Dorsolateral prefrontal cortex (tissue), 120 donors: ENCODE measurements at regions of chr1 and their contacts with region 1.

Region 1: DNA sequence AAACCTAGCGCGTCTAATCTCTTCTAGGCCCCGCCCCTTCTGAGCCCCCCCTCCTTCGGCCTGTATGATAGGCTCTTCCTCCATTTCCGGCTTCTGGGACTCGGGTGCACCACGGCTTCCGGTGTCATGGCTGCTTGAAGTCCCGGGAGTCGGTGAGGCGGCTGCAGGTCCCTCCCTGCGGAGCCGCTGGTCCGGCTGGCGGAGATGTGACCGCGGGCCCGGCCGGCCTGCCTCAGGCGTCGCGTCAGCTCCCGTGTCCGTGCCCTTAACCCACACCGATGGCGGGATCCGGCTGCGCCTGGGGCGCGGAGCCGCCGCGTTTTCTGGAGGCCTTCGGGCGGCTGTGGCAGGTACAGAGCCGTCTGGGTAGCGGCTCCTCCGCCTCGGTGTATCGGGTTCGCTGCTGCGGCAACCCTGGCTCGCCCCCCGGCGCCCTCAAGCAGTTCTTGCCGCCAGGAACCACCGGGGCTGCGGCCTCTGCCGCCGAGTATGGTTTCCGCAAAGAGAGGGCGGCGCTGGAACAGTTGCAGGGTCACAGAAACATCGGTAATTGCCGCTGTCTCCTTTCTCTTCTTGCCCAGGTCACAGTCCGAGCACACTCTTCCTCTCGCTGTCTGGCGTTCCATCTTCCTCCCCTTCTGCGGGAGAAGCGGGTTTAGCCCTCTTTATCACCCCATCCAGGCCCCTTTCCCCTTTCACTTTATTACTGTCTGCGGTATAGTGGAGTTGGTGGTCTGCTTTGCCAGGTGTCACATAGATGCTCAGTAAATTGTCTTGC is at the start of gene UHMK1:
- DNase-seq: peak; percentile 83 to 94 (median 90)
- H3K4me3 ChIP-seq: peak within 1 kb of the TSS; percentile 67 to 100 (median 97)
- H3K27ac ChIP-seq: peak within 1 kb of the TSS; percentile 66 to 97 (median 91)
- H3K27me3 ChIP-seq: no peaks in the 10 kb centered on the region
- CTCF ChIP-seq: peak in 9 of 56 donors; percentile 2 to 28 (median 16)
- total RNA-seq, gene UHMK1: 37.6 to 89.4 (median 64.2) TPM

Region 2: GRCh38 chr1:162357681-162358266 is 140.1 kb before region 1 on chr1:
- intact Hi-C with region 1: no loop called
- DNase-seq: no peak
- H3K4me3 ChIP-seq: no peak overlapping the region
- H3K27ac ChIP-seq: no peak overlapping the region
- H3K27me3 ChIP-seq: no peaks in the 10 kb centered on the region
- CTCF ChIP-seq: peak in 35 of 56 donors; percentile 9 to 55 (median 27)

Region 3: DNA sequence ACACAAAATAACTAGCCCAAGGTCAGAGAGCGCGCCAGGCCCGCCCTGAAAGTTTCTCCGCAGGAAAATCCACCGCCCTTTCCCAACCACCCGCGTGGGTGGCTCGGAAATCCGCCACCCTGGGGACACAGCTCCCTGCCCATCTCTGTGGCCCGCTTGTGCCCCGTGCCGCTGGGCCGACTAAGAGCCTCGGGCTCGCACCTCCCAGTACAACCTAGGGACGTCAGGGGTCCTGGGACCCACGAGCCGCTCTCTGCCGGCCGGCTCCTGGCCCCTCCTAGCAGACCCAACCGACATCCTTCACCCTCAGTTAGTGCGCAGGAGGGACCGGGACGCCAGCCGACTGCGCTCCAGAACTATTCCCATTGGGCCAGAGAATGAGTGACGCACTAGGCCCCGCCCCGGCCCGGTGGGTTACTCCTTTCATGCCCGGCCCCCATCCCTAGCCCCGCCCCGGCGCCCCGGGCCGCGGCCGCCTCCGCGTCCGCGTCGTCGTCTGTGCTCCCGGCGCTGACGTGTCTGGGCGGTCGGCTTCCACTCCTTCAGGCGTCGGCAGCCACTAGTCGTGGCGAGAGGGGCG is 63.2 kb after region 1 on chr1:
- intact Hi-C with region 1: loop called (anchors 5 to 10 kb)
- DNase-seq: peak; percentile 93 to 99 (median 98)
- H3K4me3 ChIP-seq: peak overlapping the region; percentile 52 to 100 (median 90)
- H3K27ac ChIP-seq: peak overlapping the region; percentile 80 to 98 (median 92)
- H3K27me3 ChIP-seq: no peaks in the 10 kb centered on the region
- CTCF ChIP-seq: peak in 10 of 56 donors; percentile 7 to 45 (median 19)

Region 4: GRCh38 chr1:162616848-162617247 is 118.9 kb after region 1 on chr1:
- intact Hi-C with region 1: no loop called
- DNase-seq: no peak
- H3K4me3 ChIP-seq: no peak overlapping the region
- H3K27ac ChIP-seq: no peak overlapping the region
- H3K27me3 ChIP-seq: no peaks in the 10 kb centered on the region
- CTCF ChIP-seq: no peak

Region 5: DNA sequence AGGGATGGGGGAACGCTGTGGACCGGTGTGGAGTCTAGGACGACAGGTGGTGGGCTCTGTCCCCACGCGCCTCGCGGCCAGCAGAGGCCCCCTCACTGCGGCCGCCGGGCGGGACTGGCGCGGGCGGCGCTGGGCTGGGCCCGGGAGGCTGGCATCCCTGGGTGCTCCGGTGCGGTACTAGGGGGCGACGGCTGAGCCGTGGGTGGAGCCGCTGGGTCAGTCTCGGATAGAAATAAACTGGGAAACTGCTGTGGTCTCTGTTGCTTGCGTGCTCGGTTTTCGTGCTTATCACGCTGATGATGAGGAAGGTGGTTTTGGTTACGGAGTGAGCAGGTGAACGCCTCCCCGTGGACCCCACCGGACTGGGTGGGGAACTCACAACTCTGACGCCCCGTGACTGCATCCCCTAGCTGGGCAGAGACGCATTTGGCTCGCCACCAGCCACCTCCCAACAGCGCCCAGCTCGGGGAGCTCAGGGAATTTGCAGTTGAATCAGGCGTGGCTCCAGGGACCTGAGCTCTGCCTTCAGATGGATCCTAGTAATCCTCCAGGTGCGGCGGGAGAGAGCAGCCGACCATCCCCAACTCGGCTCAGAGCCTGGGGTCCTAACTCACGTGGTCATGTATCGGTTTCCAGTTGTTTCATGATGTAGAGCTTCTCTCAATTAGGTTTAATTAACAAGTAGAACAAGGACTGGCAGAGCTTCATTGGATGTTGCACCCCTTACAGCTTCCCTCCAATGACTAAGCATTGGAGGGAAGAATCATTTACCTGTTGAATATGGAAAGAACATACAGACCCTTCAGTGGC is 324.7 kb after region 1 on chr1:
- intact Hi-C with region 1: no loop called
- DNase-seq: peak in 8 of 10 donors; percentile 4 to 64 (median 46)
- H3K4me3 ChIP-seq: peak overlapping the region; percentile 41 to 78 (median 61)
- H3K27ac ChIP-seq: peak overlapping the region in 58 of 59 donors; percentile 18 to 90 (median 70)
- H3K27me3 ChIP-seq: no peaks in the 10 kb centered on the region
- CTCF ChIP-seq: peak in 1 of 56 donors; percentile 11